Posterior cingulate gyrus (tissue), 11 donors: ENCODE measurements at regions of chr3 and their contacts with region 1.

Region 1: DNA sequence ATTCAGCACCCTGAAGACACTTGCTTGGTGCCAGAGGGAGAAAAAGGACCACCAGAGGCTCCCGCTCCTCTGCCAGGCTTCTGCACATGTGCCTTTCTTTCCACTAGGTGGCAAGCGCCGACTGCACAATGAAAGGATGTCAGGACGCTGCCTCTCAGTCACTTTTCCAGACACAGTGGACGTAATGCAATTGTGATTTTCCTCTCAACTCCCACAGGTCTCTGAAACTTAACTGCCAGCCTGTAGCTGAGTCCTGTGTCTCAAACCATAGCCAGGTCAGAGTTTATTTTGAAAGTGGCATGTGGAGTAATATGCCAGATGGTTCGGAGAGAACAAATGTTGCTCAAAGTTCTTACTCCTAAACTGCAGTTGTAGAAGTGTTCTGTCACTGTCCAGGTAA is 162.9 kb downstream of the ITPR1 start:
- DNase-seq: peak; percentile 54 to 96 (median 72)

Region 2: DNA sequence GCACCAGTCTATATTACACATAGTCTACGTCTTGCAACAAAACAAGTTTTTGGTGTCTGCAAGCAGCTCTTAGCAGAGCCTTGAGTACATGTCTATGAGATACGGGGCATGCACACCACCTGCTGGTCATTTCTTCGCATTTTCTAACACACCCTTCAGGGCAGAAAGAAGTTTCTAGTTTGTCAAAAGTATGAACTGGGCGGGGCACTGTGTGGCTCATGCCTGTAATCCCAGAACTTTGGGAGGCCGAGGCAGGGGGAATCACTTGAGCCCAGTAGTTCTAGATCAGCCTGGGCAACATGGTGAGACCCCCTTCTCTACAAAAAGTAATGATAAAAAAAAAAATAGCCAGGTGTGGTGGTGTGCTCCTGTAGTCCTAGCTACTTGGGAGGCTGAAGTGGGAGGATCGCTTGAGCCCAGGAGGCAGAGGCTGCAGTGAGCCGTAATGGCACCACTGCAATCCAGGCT is 401.8 kb after region 1 on chr3:
- intact Hi-C with region 1: loop called (anchors 5 kb)
- DNase-seq: peak in 8 of 10 donors; percentile 33 to 93 (median 61)